K562 (cell line): ENCODE measurements at regions of chr4 and their contacts with region 1.

Region 1: GRCh38 chr4:109433205-109434006 is at the start of gene SEC24B:
- DNase-seq: peak; percentile 85 to 88 (median 86)
- ATAC-seq: peak; percentile 94
- H3K4me3 ChIP-seq: peak within 1 kb of the TSS; percentile 74
- H3K27ac ChIP-seq: peak within 1 kb of the TSS; percentile 83
- H3K4me1 ChIP-seq: peaks cover 8 to 9% of the 10 kb centered on the region in 2 experiments; a peak in 4 of 5 replicates
- H3K27me3 ChIP-seq: no peaks in the 10 kb centered on the region
- CTCF ChIP-seq: peak; percentile 63 to 86 (median 69); a peak in 5 of 6 replicates
- EP300 ChIP-seq: no peak
- POLR2A ChIP-seq: peak; percentile 74
- RAD21 ChIP-seq: peak; percentile 55 to 66
- polyA plus RNA-seq, gene SEC24B: 6.3 to 8.1 TPM

Region 2: DNA sequence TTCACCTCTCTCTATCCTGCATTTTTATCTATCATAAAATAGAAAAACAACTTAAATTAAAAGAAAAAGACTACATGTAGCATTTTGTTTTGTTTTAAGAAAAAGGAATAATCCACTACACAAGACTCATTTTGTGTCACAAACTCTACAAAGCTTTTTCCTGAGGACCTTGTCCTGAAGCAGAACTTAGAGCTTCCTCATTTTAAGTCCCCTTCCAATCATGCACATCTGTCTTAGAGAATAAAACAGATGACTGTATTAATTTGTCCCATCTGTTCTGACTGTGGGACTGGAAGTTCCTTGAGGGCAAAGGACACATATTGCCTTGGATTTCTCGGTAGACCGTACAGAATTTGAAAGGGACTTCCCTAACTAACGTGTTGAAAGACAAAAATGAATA is 349.5 kb before region 1 on chr4:
- CTCF ChIA-PET with region 1: no interaction called
- POLR2A ChIA-PET with region 1: no interaction called
- in situ Hi-C with region 1: no loop called
- intact Hi-C with region 1: no loop called
- DNase-seq: no peak
- ATAC-seq: no peak
- H3K4me3 ChIP-seq: no peak overlapping the region
- H3K27ac ChIP-seq: no peak overlapping the region
- H3K4me1 ChIP-seq: no peaks in the 10 kb centered on the region; a peak in 1 of 5 replicates
- H3K27me3 ChIP-seq: no peaks in the 10 kb centered on the region
- CTCF ChIP-seq: no peak
- EP300 ChIP-seq: no peak
- POLR2A ChIP-seq: no peak
- RAD21 ChIP-seq: no peak

Region 3: GRCh38 chr4:109574102-109574850 is 140.9 kb after region 1 on chr4:
- CTCF ChIA-PET with region 1: no interaction called
- POLR2A ChIA-PET with region 1: no interaction called
- in situ Hi-C with region 1: no loop called
- intact Hi-C with region 1: loop called (anchors 1 kb)
- DNase-seq: peak in 2 of 4 experiments; percentile 35 to 51
- ATAC-seq: peak; percentile 91
- H3K4me3 ChIP-seq: no peak overlapping the region
- H3K27ac ChIP-seq: no peak overlapping the region
- H3K4me1 ChIP-seq: peaks cover 0 to 16% of the 10 kb centered on the region in 2 experiments; a peak in 4 of 5 replicates
- H3K27me3 ChIP-seq: no peaks in the 10 kb centered on the region
- CTCF ChIP-seq: peak; percentile 44 to 71 (median 49); a peak in 5 of 6 replicates
- EP300 ChIP-seq: no peak
- POLR2A ChIP-seq: no peak
- RAD21 ChIP-seq: peak; percentile 48 to 71; a peak in 3 of 4 replicates

Region 4: DNA sequence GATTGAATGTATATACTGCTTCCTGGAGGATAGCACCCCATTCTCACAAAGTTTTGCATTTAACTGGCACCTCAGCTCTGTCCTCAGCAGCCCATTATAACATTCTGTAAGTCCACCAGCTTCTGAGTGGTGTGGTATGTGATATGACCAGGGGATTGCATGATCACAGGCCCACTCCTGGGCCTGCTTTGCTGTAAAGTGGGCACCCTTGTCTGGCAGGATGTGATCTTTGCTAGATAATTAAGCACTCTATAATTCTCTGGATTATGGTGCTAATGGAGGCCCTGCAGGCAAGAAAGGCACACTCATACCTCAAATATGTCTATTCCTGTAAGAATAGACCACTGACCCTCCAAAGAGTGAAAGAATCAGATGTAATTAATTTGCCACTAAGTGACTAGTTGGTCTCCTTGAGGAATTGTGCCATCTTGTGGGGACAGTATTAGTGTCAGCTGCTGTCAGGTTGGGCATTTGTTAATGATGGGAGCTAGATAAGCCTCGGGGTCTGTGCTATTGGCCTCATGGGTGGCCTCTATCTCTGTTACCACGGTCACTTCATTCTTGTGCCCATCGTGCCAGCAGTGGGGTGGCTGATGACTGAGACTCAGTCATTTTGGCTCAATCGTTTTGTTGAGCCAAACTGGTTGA is 370.6 kb after region 1 on chr4:
- CTCF ChIA-PET with region 1: no interaction called
- POLR2A ChIA-PET with region 1: no interaction called
- in situ Hi-C with region 1: no loop called
- intact Hi-C with region 1: loop called (anchors 5 kb)
- DNase-seq: peak in 2 of 4 experiments; percentile 29 to 57
- ATAC-seq: peak; percentile 85
- H3K4me3 ChIP-seq: no peak overlapping the region
- H3K27ac ChIP-seq: no peak overlapping the region
- H3K4me1 ChIP-seq: no peaks in the 10 kb centered on the region; a peak in 3 of 5 replicates
- H3K27me3 ChIP-seq: no peaks in the 10 kb centered on the region
- CTCF ChIP-seq: peak; percentile 49 to 68 (median 49)
- EP300 ChIP-seq: no peak
- POLR2A ChIP-seq: no peak
- RAD21 ChIP-seq: peak; percentile 66 to 76

Region 5: GRCh38 chr4:109815151-109816081 is 382.0 kb after region 1 on chr4 and contains the start of gene GAR1:
- CTCF ChIA-PET with region 1: no interaction called
- POLR2A ChIA-PET with region 1: no interaction called
- in situ Hi-C with region 1: loop called (anchors 5 kb)
- intact Hi-C with region 1: no loop called
- DNase-seq: peak; percentile 85 to 98 (median 88)
- ATAC-seq: peak; percentile 92
- H3K4me3 ChIP-seq: peak within 1 kb of the TSS; percentile 85
- H3K27ac ChIP-seq: peak within 1 kb of the TSS; percentile 82
- H3K4me1 ChIP-seq: peaks cover 8 to 20% of the 10 kb centered on the region in 2 experiments
- H3K27me3 ChIP-seq: no peaks in the 10 kb centered on the region
- CTCF ChIP-seq: 0 out of 6 replicates have a peak, but pooled peaks of 1 of the 3 experiments have one; percentile 9
- EP300 ChIP-seq: peak; percentile 72
- POLR2A ChIP-seq: peak; percentile 90
- RAD21 ChIP-seq: no peak; a peak in 1 of 4 replicates
- polyA plus RNA-seq, gene GAR1: 35.7 to 44.2 TPM

Region 6: GRCh38 chr4:109836986-109837385 is 403.6 kb after region 1 on chr4:
- CTCF ChIA-PET with region 1: no interaction called
- POLR2A ChIA-PET with region 1: no interaction called
- in situ Hi-C with region 1: loop called (anchors 10 kb)
- intact Hi-C with region 1: no loop called
- DNase-seq: no peak
- ATAC-seq: no peak
- H3K4me3 ChIP-seq: no peak overlapping the region
- H3K27ac ChIP-seq: no peak overlapping the region
- H3K4me1 ChIP-seq: no peaks in the 10 kb centered on the region; a peak in 1 of 5 replicates
- H3K27me3 ChIP-seq: no peaks in the 10 kb centered on the region
- CTCF ChIP-seq: no peak
- EP300 ChIP-seq: no peak
- POLR2A ChIP-seq: no peak
- RAD21 ChIP-seq: no peak